ENCODE measurements at regions of chr1 and their contacts with region 1.

Region 1: DNA sequence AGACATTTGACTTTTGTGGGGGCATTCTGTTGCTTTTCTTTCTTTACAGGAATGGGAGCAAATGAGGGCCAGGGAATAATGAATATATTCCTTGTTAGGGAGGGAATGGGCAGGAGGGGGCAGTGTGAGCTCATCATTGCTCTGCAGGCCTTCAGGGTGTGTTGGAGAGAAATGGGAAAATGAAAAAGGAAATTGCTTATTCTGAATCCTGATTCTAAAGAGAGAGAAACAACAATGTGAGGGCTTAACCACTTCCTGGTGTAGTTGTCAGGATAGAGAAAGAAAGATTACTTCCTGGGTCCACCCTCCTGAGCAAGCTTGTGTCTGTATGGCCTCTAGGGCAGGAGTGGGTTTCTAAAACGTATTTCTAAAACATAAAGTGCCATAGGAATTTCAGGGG is 28.3 kb downstream of the VANGL2 start:
- DNase-seq: peak; percentile 70
- ATAC-seq: peak; percentile 19
- H3K4me3 ChIP-seq: no peak overlapping the region
- H3K4me3 Mint-ChIP-seq: peak overlapping the region; percentile 38
- H3K27ac ChIP-seq: peak overlapping the region; percentile 88 to 89
- H3K27ac Mint-ChIP-seq: peak overlapping the region; percentile 99
- H3K4me1 ChIP-seq: peaks cover 57 to 60% of the 10 kb centered on the region in 2 donors
- H3K4me1 Mint-ChIP-seq: peaks cover 55% of the 10 kb centered on the region
- H3K27me3 ChIP-seq: no peaks in the 10 kb centered on the region
- H3K27me3 Mint-ChIP-seq: no peaks in the 10 kb centered on the region
- CTCF ChIP-seq: peak; percentile 67

Region 2: DNA sequence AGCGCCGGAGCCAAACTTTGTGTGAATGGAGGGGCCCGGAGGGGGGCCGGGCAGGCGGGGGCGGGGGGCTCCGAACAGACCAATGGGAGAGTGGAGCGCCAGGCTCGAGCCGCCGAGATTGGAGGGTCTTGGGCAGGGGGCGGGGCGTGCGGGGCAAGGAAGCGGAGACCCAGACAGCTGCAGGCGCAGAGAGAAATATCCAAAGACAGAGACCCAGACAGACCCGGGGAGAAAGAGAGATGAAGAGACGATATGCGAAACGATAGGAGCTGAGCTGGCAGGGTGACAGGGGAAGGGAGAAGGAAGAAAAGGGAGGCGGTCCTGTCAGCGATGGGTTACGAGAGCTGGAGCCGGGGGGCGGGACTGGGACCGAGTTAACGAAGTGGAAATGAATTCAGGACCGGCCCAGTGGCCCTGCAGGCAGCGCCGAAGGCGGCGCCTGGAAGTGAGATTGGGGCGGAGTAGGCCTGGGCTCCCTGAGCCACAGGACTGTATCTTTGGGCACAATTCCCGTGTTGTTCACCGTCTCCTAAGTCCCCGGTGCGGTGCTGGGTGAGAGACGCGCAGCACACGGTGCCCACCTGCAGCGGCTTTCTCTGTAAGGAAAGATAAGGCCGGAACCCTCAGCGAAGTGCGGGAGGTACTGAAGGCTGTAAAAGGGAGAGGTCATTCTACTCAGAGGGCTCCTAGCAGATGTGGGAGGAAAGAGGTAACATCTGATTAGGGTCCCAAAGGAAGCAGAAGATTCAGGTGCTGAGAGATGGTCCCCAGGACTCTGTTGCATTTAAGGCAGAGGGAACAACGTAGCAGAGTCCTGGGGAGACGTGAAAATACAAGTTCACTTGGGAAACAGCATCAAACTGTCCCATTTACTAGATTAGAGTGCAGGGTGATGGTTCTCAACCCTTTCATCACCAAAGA is 358.2 kb before region 1 on chr1:
- CTCF ChIA-PET with region 1: no interaction called
- POLR2A ChIA-PET with region 1: no interaction called
- intact Hi-C with region 1: no loop called
- DNase-seq: peak; percentile 81
- ATAC-seq: peak; percentile 98
- H3K4me3 ChIP-seq: peak overlapping the region in 4 of 5 experiments; percentile 48 to 63 (median 60)
- H3K4me3 Mint-ChIP-seq: peak overlapping the region; percentile 90
- H3K27ac ChIP-seq: no peak overlapping the region
- H3K27ac Mint-ChIP-seq: no peak overlapping the region
- H3K4me1 ChIP-seq: peaks cover 11 to 12% of the 10 kb centered on the region in 2 donors
- H3K4me1 Mint-ChIP-seq: peaks cover 12% of the 10 kb centered on the region
- H3K27me3 ChIP-seq: peaks cover 0 to 32% (median 19%) of the 10 kb centered on the region in 4 experiments
- H3K27me3 Mint-ChIP-seq: peaks cover 56% of the 10 kb centered on the region
- CTCF ChIP-seq: no peak

Region 3: DNA sequence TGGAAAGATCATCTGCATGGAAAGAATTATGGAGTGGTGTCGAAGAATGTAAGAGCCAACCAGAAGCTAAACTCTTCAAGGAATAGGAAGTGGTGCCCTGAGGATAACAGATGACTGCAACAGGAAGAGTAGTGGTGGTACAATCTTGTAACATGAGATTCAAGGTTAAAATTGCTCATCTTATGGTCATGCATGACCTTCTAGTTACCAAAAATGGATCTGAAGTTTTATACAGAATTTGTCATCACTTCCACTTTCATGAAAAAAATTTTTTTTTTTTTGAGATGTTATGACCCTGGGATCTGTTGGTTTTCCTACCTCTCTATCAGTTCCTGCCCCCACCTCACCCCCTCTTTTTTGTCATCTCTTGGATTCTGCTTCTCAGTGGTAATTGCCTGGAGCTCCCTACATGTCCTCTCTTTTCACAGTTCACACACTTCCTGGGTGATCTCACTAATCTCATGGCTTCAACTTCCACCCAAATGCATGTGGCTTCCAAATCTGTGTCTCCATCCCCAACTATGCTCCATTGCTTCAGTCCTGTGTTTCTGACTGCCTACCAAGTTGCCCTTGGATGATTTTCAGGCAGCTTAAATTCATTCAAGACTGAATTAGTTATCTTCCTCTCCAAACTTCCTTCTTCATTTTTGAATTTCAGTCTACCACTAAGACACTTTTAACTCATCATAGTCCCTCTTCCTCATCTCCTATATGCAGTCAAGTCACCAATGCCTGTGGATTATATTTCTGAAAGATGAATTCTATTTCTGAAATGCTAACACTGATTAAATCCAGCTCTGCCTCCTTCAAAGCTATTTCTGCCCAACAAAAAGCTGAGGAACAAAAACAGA is 46.0 kb after region 1 on chr1:
- CTCF ChIA-PET with region 1: interaction called, 4 read pairs
- POLR2A ChIA-PET with region 1: interaction called, 3 read pairs
- intact Hi-C with region 1: loop called (anchors 1 kb)
- DNase-seq: peak; percentile 54
- ATAC-seq: peak; percentile 94
- H3K4me3 ChIP-seq: peak overlapping the region in 2 of 5 experiments; percentile 20 to 42
- H3K4me3 Mint-ChIP-seq: no peak overlapping the region
- H3K27ac ChIP-seq: peak overlapping the region; percentile 78 to 87
- H3K27ac Mint-ChIP-seq: no peak overlapping the region
- H3K4me1 ChIP-seq: peaks cover 49 to 54% of the 10 kb centered on the region in 2 donors
- H3K4me1 Mint-ChIP-seq: peaks cover 26% of the 10 kb centered on the region
- H3K27me3 ChIP-seq: no peaks in the 10 kb centered on the region
- H3K27me3 Mint-ChIP-seq: no peaks in the 10 kb centered on the region
- CTCF ChIP-seq: no peak

Region 4: GRCh38 chr1:160519642-160520435 is 91.2 kb after region 1 on chr1:
- CTCF ChIA-PET with region 1: interaction called, 17 read pairs
- POLR2A ChIA-PET with region 1: interaction called, 4 read pairs
- intact Hi-C with region 1: loop called (anchors 1 kb)
- DNase-seq: peak; percentile 47
- ATAC-seq: peak; percentile 37
- H3K4me3 ChIP-seq: peak overlapping the region; percentile 14 to 96 (median 67)
- H3K4me3 Mint-ChIP-seq: peak overlapping the region; percentile 99
- H3K27ac ChIP-seq: peak overlapping the region; percentile 9 to 91
- H3K27ac Mint-ChIP-seq: peak overlapping the region; percentile 99
- H3K4me1 ChIP-seq: peaks cover 53 to 66% of the 10 kb centered on the region in 2 donors
- H3K4me1 Mint-ChIP-seq: peaks cover 90% of the 10 kb centered on the region
- H3K27me3 ChIP-seq: no peaks in the 10 kb centered on the region
- H3K27me3 Mint-ChIP-seq: no peaks in the 10 kb centered on the region
- CTCF ChIP-seq: peak; percentile 59

Region 5: DNA sequence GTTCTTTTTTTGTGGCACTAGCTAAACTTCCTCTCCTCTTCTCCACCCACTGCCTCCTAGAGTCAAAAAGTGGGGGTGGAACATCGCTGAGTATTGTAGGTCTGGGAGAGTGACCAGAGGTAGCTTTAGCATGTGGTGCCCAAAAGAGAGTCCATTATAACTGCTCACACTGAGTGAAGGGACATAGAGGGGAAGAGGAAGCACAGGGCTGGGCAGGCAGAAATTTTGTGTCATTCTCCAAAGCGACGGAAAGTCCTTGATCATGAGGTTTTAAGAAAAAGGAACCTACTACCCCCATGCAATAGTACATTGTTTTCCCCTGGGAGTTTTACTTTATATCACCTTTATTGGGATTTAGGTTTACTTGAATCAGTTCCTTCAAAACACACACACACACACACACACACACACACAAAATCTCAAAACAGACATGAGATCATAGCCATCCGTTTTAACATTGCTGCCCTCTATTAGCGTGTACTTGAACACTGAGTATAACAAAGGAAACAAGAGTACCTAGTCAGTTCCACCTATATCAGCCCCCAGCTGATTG is 146.5 kb after region 1 on chr1:
- CTCF ChIA-PET with region 1: interaction called, 14 read pairs
- POLR2A ChIA-PET with region 1: no interaction called
- intact Hi-C with region 1: no loop called
- DNase-seq: peak; percentile 78
- ATAC-seq: peak; percentile 74
- H3K4me3 ChIP-seq: peak overlapping the region in 3 of 5 experiments; percentile 9 to 89 (median 27)
- H3K4me3 Mint-ChIP-seq: peak overlapping the region; percentile 76
- H3K27ac ChIP-seq: peak overlapping the region; percentile 59 to 74
- H3K27ac Mint-ChIP-seq: peak overlapping the region; percentile 90
- H3K4me1 ChIP-seq: peaks cover 52 to 53% of the 10 kb centered on the region in 2 donors
- H3K4me1 Mint-ChIP-seq: peaks cover 76% of the 10 kb centered on the region
- H3K27me3 ChIP-seq: no peaks in the 10 kb centered on the region
- H3K27me3 Mint-ChIP-seq: no peaks in the 10 kb centered on the region
- CTCF ChIP-seq: no peak

Region 6: DNA sequence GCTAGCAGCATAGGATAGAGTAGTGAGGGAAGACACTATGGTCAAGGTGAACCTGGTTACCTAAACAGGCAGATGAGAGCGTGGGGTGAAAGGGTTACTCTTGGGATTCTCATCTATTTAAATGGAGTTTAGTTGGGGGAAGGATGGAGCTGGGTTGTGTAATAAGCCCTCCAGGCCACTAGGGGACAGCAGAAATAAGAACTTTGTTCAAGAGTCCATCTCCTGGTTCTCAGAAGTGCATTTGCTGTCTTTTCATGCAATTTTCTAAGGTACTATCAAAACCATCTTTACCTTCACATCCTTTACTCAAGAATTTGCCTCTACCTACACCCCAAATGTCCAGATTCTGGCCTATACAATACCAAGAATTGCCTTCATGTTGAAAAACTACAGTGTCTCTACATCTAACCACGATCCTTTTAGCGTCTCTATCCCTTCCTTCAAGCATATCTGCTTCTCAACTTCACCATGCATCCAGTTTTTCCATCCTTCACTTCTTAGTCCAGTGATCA is 190.2 kb after region 1 on chr1:
- CTCF ChIA-PET with region 1: interaction called, 233 read pairs
- POLR2A ChIA-PET with region 1: no interaction called
- intact Hi-C with region 1: no loop called
- DNase-seq: peak; percentile 58
- ATAC-seq: peak; percentile 42
- H3K4me3 ChIP-seq: no peak overlapping the region
- H3K4me3 Mint-ChIP-seq: no peak overlapping the region
- H3K27ac ChIP-seq: peak overlapping the region in 1 of 2 donors; percentile 2
- H3K27ac Mint-ChIP-seq: peak overlapping the region; percentile 8
- H3K4me1 ChIP-seq: peaks cover 35 to 43% of the 10 kb centered on the region in 2 donors
- H3K4me1 Mint-ChIP-seq: peaks cover 59% of the 10 kb centered on the region
- H3K27me3 ChIP-seq: no peaks in the 10 kb centered on the region
- H3K27me3 Mint-ChIP-seq: no peaks in the 10 kb centered on the region
- CTCF ChIP-seq: peak; percentile 79

Region 7: DNA sequence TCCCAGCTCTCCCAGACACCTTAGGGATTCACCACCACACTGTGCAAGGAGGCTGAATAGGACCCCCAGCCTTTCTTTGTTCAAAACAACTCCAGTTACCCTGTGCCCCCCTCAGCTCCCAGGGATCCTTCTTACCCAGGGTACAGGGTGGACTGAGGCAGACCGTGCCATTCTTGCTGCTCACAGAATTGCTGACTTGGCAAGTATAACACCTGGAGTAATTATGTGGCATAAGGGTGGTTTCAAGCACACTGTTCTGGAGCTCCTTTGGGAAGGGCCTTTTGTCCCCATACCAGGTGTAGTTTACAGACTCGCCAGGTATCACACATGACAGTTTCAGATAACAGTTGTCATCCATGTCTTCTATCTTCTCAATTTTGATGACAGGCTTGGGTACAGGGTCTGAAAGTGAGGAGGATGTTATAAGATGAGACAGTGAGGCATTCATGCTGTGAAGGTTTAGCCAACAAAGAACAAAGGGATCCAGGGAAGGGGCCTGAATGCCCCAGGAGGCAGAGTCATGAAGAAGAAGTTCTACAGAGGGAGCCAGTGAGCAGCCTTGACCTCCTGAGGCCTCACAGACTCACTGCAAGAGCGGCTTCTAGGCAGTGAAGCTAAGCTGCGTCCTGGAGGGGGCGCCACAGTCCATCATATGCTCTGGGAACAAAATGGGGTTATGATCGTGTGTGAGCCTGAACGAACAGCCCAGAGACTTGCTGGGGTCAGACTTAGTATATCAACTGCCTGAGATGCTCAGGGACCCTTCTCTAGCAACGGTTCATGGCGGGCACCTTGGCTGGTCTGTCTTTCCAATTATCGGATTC is 252.6 kb after region 1 on chr1:
- CTCF ChIA-PET with region 1: interaction called, 37 read pairs
- POLR2A ChIA-PET with region 1: no interaction called
- intact Hi-C with region 1: no loop called
- DNase-seq: peak; percentile 89
- ATAC-seq: peak; percentile 93
- H3K4me3 ChIP-seq: no peak overlapping the region
- H3K4me3 Mint-ChIP-seq: no peak overlapping the region
- H3K27ac ChIP-seq: peak overlapping the region in 1 of 2 donors; percentile 82
- H3K27ac Mint-ChIP-seq: peak overlapping the region; percentile 72
- H3K4me1 ChIP-seq: peaks cover 38 to 45% of the 10 kb centered on the region in 2 donors
- H3K4me1 Mint-ChIP-seq: peaks cover 51% of the 10 kb centered on the region
- H3K27me3 ChIP-seq: no peaks in the 10 kb centered on the region
- H3K27me3 Mint-ChIP-seq: no peaks in the 10 kb centered on the region
- CTCF ChIP-seq: peak; percentile 92